Breast epithelium (tissue), 4 donors: ENCODE measurements at regions of chr2 and their contacts with region 1.

Region 1: GRCh38 chr2:142270291-142270690 is 139.5 kb upstream of the LRP1B start:
- DNase-seq: no peak
- H3K4me3 ChIP-seq: no peak overlapping the region
- H3K27ac ChIP-seq: no peak overlapping the region
- H3K4me1 ChIP-seq: no peaks in the 10 kb centered on the region
- H3K27me3 ChIP-seq: no peaks in the 10 kb centered on the region
- CTCF ChIP-seq: no peak
- POLR2A ChIP-seq: no peak

Region 2: DNA sequence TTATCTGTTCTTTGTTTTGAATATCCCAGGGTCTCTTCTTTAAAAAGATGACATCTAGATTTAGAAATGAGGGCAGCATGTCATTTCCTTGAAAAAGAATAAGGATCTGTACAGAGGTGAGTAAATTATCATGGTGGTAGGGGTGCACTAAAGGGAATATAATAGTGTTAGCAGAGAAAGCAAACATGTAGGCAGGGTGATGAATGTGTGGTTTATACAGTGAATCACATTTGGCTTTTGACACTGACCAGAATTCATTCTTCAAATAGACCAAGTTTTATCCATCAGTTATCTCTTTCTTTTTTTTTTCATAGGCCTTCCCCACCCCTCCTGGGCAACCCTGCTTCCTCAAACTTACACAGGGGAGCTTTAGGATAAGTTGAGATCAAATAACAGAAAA is 45.1 kb after region 1 on chr2:
- intact Hi-C with region 1: loop called (anchors 2 kb)
- DNase-seq: no peak
- H3K4me3 ChIP-seq: no peak overlapping the region
- H3K27ac ChIP-seq: no peak overlapping the region
- H3K4me1 ChIP-seq: no peaks in the 10 kb centered on the region
- H3K27me3 ChIP-seq: no peaks in the 10 kb centered on the region
- CTCF ChIP-seq: no peak
- POLR2A ChIP-seq: no peak

Region 3: DNA sequence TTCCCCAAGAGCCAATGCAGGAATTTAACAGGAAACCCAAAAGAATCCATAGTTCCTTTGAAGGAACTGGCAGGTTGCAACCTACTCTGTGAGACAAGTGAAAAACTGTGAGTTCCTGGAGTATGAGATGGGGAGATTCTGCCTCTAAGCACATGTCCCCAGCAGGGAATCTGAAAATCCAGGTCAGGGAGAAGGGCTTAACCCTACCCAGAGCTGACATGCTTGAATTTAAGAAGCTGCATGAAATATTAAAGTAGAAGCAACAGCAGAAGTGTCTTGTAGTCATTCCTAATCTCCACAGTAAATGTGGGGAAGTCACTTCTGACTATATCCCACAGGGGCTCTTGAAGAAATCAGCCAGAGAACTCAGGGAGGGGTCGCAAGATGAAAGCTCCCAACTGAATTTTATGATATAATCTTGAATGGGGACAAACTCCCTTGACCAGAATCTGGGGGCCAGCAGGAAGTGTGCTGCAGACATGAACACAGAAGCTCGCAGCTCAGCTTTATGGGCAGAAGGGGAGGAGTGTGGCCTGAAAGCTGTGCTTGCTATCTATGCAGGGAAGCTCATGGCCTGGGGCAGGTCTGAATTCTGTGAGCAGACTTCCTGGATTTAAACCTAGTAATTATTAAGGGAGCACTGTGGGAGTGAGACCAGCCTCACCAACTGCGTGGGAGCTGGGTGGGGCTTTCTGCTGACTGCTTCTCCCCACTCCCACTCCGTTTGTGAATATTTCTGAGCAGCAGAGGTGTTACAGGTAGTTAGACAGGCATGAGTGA is 423.1 kb after region 1 on chr2:
- intact Hi-C with region 1: no loop called
- DNase-seq: no peak
- H3K4me3 ChIP-seq: no peak overlapping the region
- H3K27ac ChIP-seq: no peak overlapping the region
- H3K4me1 ChIP-seq: no peaks in the 10 kb centered on the region
- H3K27me3 ChIP-seq: no peaks in the 10 kb centered on the region
- CTCF ChIP-seq: no peak
- POLR2A ChIP-seq: no peak